Gastrocnemius medialis (tissue), 4 donors: ENCODE measurements at regions of chr5 and their contacts with region 1.

Region 1: GRCh38 chr5:60944904-60945812 is at the starts of genes ERCC8 and NDUFAF2:
- DNase-seq: peak; percentile 91 to 92
- ATAC-seq: peak; percentile 97 to 98
- H3K4me3 ChIP-seq: peak within 1 kb of the TSS; percentile 76 to 88 (median 85)
- H3K27ac ChIP-seq: peak within 1 kb of the TSS; percentile 85 to 95 (median 90)
- H3K4me1 ChIP-seq: peaks cover 19 to 23% of the 10 kb centered on the region in 2 donors
- H3K27me3 ChIP-seq: no peaks in the 10 kb centered on the region
- CTCF ChIP-seq: no peak
- POLR2A ChIP-seq: peak; percentile 75 to 86
- total RNA-seq, gene ERCC8: 4.8 to 7.3 (median 5.6) TPM
- total RNA-seq, gene NDUFAF2: 25.8 to 54.3 (median 51.2) TPM

Region 2: GRCh38 chr5:60312098-60312497 is 633.1 kb before region 1 on chr5:
- in situ Hi-C with region 1: no loop called
- intact Hi-C with region 1: no loop called
- DNase-seq: no peak
- ATAC-seq: no peak
- H3K4me3 ChIP-seq: no peak overlapping the region
- H3K27ac ChIP-seq: no peak overlapping the region
- H3K4me1 ChIP-seq: no peaks in the 10 kb centered on the region
- H3K27me3 ChIP-seq: no peaks in the 10 kb centered on the region
- CTCF ChIP-seq: no peak
- POLR2A ChIP-seq: no peak

Region 3: GRCh38 chr5:60960591-60960990 is 15.4 kb after region 1 on chr5:
- in situ Hi-C with region 1: no loop called
- intact Hi-C with region 1: loop called (anchors 2 kb)
- DNase-seq: no peak
- ATAC-seq: no peak
- H3K4me3 ChIP-seq: no peak overlapping the region
- H3K27ac ChIP-seq: no peak overlapping the region
- H3K4me1 ChIP-seq: peaks cover 17 to 19% of the 10 kb centered on the region in 2 donors
- H3K27me3 ChIP-seq: no peaks in the 10 kb centered on the region
- CTCF ChIP-seq: peak in 2 of 5 experiments; percentile 6 to 34
- POLR2A ChIP-seq: no peak

Region 4: GRCh38 chr5:61162010-61162831 is 217.1 kb after region 1 on chr5 and contains the start of gene SMIM15:
- in situ Hi-C with region 1: no loop called
- intact Hi-C with region 1: loop called (anchors 2 kb)
- DNase-seq: peak; percentile 75 to 85
- ATAC-seq: peak; percentile 94 to 96
- H3K4me3 ChIP-seq: peak within 1 kb of the TSS; percentile 87 to 99 (median 94)
- H3K27ac ChIP-seq: peak within 1 kb of the TSS; percentile 87 to 95 (median 93)
- H3K4me1 ChIP-seq: peaks cover 14 to 26% of the 10 kb centered on the region in 2 donors
- H3K27me3 ChIP-seq: no peaks in the 10 kb centered on the region
- CTCF ChIP-seq: no peak
- POLR2A ChIP-seq: peak; percentile 42 to 68
- total RNA-seq, gene SMIM15: 6.2 to 17.1 (median 10.4) TPM

Region 5: DNA sequence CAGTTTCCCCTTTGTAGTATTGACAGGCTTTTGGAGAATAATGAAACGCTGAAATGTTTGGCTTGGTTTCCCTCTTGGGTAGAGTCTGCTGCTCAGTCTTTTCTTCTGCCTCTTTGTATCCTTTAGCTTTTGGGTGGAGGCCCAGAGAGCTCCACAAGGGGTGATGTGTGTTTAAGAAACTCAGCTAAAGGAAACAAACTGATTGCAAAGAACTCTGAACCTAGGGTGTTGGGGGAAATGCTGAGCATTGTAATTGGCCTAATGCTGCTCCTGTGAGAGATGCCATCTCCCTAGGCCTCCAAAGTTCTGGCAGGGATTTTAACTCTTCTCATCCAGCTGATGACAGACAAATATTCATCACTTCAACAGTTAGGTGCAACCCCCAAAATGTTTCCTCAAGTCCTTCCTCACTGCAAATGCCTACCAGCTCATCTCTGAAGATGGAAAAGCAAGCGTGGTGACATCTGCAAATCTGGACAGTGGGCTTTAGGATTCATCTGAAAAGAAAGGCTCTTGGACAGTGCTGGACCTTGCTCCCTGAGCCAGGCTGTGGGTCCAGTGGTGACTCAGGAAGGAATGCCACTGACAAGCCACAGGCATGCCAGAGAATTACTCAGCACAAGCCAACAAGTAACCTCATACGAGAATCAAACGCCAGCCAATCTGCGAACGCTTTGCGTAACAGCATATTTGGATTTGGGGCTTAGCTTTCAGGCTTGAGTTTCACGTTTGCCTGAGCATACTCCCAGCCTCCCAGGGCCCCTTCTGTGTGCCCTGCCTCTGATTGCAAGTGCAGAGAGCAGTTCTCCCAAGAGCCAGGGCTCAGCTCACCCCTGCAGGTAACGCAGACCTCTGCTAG is 356.4 kb after region 1 on chr5:
- in situ Hi-C with region 1: no loop called
- intact Hi-C with region 1: loop called (anchors 10 kb)
- DNase-seq: peak; percentile 80 to 82
- ATAC-seq: peak; percentile 98 to 99
- H3K4me3 ChIP-seq: no peak overlapping the region
- H3K27ac ChIP-seq: no peak overlapping the region
- H3K4me1 ChIP-seq: peaks cover 16 to 21% of the 10 kb centered on the region in 2 donors
- H3K27me3 ChIP-seq: no peaks in the 10 kb centered on the region
- CTCF ChIP-seq: no peak
- POLR2A ChIP-seq: no peak

Region 6: DNA sequence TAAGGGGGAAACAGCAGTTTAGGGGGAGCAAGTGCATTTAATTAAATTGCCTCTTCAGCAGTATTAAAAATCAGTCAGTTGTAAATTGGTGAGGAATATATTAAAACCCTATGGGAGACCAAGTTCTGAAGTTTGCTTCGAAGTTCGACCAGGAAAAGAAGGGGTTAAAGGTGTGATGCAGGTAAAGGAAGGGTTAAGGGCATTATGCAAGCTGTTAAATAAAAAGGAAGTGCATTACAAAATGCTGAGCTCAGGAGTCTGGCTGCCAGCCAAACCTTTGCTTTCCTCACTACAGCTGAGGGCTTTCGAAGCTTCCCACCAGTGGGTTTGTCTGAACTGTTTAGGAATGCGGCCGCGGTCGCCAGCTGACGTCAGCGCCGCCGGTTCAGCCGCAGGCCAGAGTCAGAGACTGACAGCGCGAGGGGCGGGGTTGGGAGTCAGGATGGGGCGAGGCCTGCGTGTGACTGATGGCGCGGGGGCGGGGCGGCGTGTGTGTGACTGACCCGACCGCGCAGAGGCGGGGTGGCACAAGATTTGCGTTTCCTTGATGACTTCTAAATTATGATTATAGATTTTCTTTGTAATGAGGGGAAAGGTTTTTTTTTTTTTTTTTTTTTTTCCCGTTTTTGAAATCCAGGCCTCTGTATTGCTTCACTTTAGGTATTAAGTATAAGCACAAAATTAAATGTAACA is 463.5 kb after region 1 on chr5:
- in situ Hi-C with region 1: no loop called
- intact Hi-C with region 1: loop called (anchors 5 kb)
- DNase-seq: peak; percentile 96 to 98
- ATAC-seq: peak; percentile 97 to 98
- H3K4me3 ChIP-seq: peak overlapping the region; percentile 35 to 41 (median 36)
- H3K27ac ChIP-seq: peak overlapping the region; percentile 44 to 66 (median 56)
- H3K4me1 ChIP-seq: peaks cover 10 to 18% of the 10 kb centered on the region in 2 donors
- H3K27me3 ChIP-seq: no peaks in the 10 kb centered on the region
- CTCF ChIP-seq: no peak
- POLR2A ChIP-seq: no peak

Region 7: DNA sequence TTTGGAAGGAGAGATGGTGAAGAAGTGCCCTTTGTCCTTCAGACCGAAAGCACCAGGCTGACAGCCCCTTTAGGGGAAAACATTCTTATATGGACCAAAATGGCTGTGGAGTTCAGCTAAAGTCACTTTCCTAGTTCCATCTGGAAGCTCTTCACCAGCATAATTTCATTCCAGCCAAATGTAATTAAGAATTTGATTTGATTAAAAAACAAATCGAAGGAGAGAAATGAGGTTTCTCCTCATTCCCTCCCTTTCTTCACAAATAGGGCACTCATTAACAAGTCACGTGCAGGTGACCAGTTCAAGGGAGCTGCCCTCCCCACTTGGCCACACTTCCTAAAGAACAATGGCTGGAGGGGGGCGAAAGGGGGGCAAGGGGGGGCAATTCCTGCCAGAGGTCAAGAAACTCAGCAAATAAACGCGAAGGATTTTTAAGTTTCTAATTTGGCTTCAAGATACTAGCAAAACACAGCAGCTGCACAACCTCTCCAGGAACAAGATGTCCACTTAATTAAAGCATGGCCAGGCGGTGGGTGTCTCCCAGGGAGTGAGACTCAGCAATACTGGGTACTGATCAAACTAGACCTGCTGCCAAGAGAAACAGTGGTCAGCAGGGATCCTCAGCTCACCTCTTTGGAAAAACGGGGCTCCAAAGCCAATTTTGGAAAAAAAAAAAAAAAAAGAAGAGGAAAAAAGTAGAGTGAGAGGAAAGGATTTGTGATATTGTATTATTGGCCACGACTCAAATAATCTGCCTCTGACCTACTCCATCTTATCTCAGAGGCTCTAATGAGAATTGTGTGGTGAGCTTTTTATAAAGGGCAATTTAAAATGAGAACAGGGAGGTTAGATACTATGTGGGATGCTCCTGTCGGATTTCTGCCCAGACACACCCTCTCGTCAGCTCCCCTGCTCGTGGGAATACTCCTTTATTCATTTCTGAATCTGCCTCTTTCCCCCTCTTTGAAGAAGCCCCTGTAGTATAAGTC is 641.2 kb after region 1 on chr5:
- in situ Hi-C with region 1: no loop called
- intact Hi-C with region 1: no loop called
- DNase-seq: no peak
- ATAC-seq: no peak
- H3K4me3 ChIP-seq: no peak overlapping the region
- H3K27ac ChIP-seq: no peak overlapping the region
- H3K4me1 ChIP-seq: no peaks in the 10 kb centered on the region
- H3K27me3 ChIP-seq: no peaks in the 10 kb centered on the region
- CTCF ChIP-seq: no peak
- POLR2A ChIP-seq: no peak

Region 8: GRCh38 chr5:61706751-61707150 is 761.6 kb after region 1 on chr5:
- in situ Hi-C with region 1: no loop called
- intact Hi-C with region 1: no loop called
- DNase-seq: no peak
- ATAC-seq: no peak
- H3K4me3 ChIP-seq: no peak overlapping the region
- H3K27ac ChIP-seq: no peak overlapping the region
- H3K4me1 ChIP-seq: no peaks in the 10 kb centered on the region
- H3K27me3 ChIP-seq: no peaks in the 10 kb centered on the region
- CTCF ChIP-seq: no peak
- POLR2A ChIP-seq: no peak